ENCODE measurements at regions of chr17 and their contacts with region 1.

Region 1: GRCh38 chr17:68468788-68469187 is 11.5 kb upstream of the WIPI1 start:
- DNase-seq: no peak

Region 2: DNA sequence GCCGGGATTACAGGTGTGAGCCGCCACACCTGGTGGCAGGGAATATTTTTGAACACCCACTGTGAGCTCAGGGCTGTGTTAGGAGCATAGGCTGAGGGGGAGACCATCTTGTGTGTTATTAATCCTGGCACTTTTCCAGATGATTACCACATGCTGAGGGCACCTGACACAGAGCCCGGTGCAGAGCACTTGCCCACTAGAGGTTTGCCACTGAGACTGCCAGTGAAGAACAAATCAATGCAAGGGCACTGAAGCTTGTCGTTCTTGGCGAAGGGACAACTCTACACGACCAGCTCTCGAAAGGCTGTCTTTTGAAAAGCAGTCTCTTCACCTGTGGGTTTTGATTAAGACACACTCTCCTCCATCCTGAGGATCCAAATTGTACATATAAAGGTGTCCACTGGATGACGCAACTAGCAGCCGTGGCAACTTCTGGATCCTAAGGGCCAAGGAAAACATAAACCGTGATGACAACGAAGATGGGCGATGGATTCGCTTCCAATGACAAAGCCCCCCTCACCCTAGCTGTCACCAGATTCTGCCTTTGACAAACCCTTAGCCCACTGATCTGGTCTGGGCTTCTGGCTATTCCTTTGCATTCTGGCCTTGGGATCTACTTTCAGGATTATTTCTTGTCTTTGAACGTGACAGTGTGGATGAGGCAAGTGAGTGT is 40.2 kb before region 1 on chr17:
- intact Hi-C with region 1: loop called in 1 of 2 experiments (anchors 1 kb)
- DNase-seq: no peak

Measured in posterior vena cava (tissue), 2 donors.